Activated T-helper 1 cell treated with anti-CD3 and anti-CD28 coated beads, Interleukin-12 subunit alpha, Interleukin-12 subunit beta, Interleukin-2, Interleukin-4 antibody, amounts not matched to agents 30 ng/mL and 10 ng/mL and 1 ng/mL, durations not matched to agents 14 hours and 24 hours and 36 hours (primary cell): ENCODE measurements at regions of chr16 and their contacts with region 1.

Region 1: DNA sequence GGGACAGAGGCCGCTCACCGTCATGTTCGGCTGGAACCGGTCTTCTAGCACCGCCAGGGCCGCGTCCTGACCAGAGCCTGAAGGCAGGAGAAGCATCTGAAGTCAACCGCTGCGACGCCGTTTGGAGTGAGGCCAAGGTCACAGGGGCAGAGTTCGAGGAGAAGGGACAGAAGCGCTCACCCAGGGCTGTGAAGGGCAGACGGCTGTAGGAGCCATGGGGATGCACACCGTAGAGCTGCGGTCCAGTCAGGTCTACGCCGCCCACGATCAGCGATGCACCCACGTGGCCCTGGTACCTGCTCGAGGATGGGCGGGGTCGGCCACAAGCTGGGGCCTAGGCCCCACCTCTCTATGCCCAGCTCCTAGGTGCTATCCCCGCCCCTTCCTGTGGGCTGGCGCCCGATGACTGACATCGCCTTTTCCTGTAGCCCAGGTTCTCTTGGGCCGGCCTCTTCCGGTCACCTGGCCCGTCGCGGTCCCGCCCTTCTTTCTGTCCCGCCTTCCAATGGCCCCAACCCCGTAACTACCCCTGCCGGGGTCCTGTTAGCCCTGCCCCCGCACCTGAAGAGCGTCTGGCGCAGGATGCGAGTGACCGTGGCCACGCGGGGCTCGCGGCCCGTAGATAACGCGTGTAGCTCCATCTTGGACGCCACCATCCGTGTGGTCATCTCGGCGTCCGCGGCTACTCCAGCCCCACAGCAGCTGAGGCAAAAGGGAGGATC is 1.1 kb downstream of the PSMB10 start:
- DNase-seq: peak; percentile 92
- H3K4me3 Mint-ChIP-seq: peak overlapping the region; percentile 98
- H3K27ac Mint-ChIP-seq: peak overlapping the region; percentile 96
- H3K4me1 Mint-ChIP-seq: peaks cover 37% of the 10 kb centered on the region
- H3K27me3 Mint-ChIP-seq: no peaks in the 10 kb centered on the region

Region 2: DNA sequence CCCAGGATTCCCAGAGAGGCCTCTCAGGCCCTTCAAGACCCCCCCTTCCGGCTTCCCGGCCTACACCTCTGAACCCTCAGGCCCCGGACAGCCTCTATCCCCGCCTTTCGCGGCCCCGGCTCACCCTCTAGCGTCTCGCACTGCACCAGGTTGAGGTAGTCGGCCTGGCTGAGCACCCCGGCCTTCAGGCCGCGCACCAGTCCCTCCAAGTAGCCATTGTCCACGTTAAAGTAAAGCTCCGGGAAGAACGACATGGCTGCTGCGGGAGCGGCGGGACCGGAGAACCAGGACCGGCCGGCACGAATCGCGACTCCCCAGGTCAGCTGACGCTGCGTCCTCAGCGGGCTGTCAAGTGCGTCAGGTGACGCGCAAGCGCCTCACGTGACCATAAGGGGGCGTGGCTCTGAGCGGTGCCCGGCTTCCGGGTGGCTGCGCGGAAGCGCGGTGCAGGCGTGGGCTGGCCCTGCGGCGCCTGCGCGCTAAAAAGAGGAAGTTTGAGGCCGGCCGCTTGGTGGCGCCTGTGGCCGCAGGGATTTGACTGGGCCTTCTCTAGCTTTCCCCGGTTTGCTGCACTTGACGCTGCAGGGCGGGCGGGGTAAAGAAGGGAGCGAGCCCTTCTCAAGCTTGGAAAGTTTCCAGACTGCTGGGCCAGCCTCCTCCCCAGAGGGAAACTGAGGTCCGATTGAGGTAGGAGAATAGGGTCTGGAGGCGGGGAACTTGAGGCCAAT is 454.6 kb before region 1 on chr16 and contains the start of gene ATP6V0D1:
- intact Hi-C with region 1: loop called (anchors 1 kb)
- DNase-seq: peak; percentile 99
- H3K4me3 Mint-ChIP-seq: peak within 1 kb of the TSS; percentile 89
- H3K27ac Mint-ChIP-seq: peak within 1 kb of the TSS; percentile 97
- H3K4me1 Mint-ChIP-seq: peaks cover 17% of the 10 kb centered on the region
- H3K27me3 Mint-ChIP-seq: no peaks in the 10 kb centered on the region
- total RNA-seq, gene ATP6V0D1: 37.7 and 41.5 TPM in 2 replicates

Region 3: GRCh38 chr16:67806428-67807147 is 129.0 kb before region 1 on chr16 and contains the starts of genes RANBP10 and TSNAXIP1:
- intact Hi-C with region 1: loop called (anchors 1 kb)
- DNase-seq: peak; percentile 96
- H3K4me3 Mint-ChIP-seq: peak within 1 kb of the TSS; percentile 90
- H3K27ac Mint-ChIP-seq: peak within 1 kb of the TSS; percentile 86
- H3K4me1 Mint-ChIP-seq: peaks cover 35% of the 10 kb centered on the region
- H3K27me3 Mint-ChIP-seq: peaks cover 3% of the 10 kb centered on the region
- total RNA-seq, gene RANBP10: 23.0 and 25.7 TPM in 2 replicates
- total RNA-seq, gene TSNAXIP1: 0.52 and 0.83 TPM in 2 replicates

Region 4: DNA sequence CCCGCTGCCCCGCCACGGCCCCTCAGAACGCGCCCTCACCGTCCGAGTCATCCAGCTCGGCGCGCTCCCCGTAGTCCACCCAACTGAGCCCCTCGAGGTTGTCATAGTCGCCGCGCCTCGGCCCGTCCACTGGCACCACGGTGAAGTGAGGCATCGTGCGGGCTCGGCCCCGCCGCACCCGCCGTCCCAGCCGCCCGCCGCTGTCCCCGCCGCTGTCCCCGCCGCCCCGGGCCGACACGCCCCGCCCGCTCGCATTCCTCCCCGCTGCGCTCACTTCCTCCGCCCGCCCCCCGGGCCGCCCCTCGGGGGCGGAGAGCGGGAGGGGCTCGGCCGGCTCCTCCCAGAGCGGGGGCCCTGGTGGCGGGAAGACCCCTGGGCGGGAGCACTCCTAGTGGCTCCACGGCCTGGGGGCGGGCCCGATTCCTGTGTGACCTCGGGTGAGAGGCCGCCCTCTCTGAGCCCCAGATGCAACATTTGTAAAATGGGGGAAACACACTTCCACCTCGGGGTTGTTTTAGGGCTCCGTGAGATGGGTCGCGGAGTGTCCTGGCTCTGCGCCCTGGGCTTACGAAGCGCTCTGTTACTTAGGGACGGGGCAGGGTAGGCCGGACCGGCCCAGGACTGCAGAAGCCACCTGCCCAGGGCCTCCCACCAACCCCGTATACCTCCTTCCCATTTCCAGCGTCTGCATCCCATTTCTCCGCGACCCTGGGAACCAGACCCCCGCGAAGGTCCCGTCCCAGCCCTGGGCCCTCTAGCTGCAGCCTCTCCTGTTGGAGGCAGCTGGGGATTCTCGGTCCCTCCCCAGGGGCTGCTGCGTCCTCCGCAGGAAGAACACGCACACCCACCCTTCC is 33.1 kb after region 1 on chr16 and contains the start of gene SLC12A4:
- intact Hi-C with region 1: loop called (anchors 1 kb)
- DNase-seq: peak; percentile 89
- H3K4me3 Mint-ChIP-seq: peak within 1 kb of the TSS; percentile 99
- H3K27ac Mint-ChIP-seq: peak within 1 kb of the TSS; percentile 96
- H3K4me1 Mint-ChIP-seq: peaks cover 40% of the 10 kb centered on the region
- H3K27me3 Mint-ChIP-seq: no peaks in the 10 kb centered on the region
- total RNA-seq, gene SLC12A4: 40.0 and 43.1 TPM in 2 replicates

Region 5: DNA sequence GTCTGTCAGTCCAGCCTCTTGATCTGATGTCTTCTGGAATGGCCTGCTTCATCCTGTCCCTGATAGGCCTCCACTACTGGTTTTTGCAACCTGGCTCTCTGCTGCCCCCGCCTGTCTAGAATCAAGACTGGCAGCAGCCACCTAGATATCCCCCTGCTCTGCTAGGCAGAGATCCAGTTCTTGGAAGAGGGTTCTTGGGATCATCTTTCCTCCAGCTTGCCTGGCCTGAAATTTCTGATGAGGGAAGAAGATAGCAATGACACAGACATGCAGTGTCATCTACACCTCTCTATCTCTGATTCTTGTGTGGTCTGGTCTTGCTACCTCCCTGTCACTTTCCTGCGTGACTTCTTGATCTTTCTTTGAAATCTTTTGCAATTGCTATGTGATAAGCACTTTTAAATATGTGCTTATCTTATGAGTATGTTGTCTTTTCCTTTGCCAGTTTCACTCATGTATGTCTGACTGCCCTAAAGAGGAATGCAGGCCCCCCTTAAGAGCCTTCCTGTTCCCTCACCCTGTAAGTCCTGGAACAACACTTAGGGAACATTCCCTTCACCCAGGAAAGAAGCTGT is 129.3 kb after region 1 on chr16:
- intact Hi-C with region 1: loop called (anchors 2 kb)
- DNase-seq: peak; percentile 59
- H3K4me3 Mint-ChIP-seq: no peak overlapping the region
- H3K27ac Mint-ChIP-seq: peak overlapping the region; percentile 75
- H3K4me1 Mint-ChIP-seq: peaks cover 81% of the 10 kb centered on the region
- H3K27me3 Mint-ChIP-seq: no peaks in the 10 kb centered on the region

Region 6: DNA sequence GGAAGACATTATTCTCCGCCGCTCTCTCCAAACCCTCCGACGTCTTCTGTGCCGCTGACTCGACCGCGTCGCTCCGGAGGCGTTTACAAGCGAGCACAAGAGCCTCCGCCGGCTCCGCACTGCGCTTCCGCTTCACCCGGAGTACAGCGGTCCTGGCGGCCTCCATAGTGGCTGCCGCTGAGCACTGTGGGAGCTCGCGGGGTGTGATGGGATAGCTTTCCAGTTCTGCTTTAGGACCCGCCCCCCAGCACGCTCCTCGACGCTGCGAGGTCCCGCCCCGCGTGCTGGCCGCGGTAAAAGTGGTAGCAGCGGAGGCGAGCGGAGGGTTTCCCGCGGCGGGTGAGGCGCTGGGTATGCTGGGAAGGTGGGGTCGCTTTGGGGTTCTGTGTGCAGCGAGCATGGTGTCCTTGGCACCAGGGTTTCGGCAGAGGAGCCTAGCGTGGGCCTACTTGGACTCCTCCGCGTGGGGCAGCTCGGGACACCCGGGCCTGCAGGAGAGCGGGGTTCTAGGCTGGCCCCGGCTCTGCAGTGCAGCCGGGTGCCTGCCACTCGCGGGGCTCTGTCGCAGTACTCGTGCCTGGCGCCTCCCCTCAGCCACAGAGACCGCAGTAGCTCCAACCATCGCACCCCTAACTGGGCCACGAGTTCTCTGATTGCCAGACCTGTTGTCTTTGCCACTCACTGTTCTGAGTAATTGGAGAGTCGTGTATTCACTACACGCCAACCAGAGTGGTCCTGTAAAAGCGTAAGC is 375.4 kb after region 1 on chr16 and contains the starts of genes PRMT7 and SLC7A6OS:
- intact Hi-C with region 1: loop called (anchors 5 kb)
- DNase-seq: peak; percentile 92
- H3K4me3 Mint-ChIP-seq: peak within 1 kb of the TSS; percentile 99
- H3K27ac Mint-ChIP-seq: peak within 1 kb of the TSS; percentile 98
- H3K4me1 Mint-ChIP-seq: peaks cover 43% of the 10 kb centered on the region
- H3K27me3 Mint-ChIP-seq: no peaks in the 10 kb centered on the region
- total RNA-seq, gene PRMT7: 80.6 and 85.2 TPM in 2 replicates
- total RNA-seq, gene SLC7A6OS: 26.5 and 27.6 TPM in 2 replicates